ENCODE measurements at regions of chr7 and their contacts with region 1.

Region 1: DNA sequence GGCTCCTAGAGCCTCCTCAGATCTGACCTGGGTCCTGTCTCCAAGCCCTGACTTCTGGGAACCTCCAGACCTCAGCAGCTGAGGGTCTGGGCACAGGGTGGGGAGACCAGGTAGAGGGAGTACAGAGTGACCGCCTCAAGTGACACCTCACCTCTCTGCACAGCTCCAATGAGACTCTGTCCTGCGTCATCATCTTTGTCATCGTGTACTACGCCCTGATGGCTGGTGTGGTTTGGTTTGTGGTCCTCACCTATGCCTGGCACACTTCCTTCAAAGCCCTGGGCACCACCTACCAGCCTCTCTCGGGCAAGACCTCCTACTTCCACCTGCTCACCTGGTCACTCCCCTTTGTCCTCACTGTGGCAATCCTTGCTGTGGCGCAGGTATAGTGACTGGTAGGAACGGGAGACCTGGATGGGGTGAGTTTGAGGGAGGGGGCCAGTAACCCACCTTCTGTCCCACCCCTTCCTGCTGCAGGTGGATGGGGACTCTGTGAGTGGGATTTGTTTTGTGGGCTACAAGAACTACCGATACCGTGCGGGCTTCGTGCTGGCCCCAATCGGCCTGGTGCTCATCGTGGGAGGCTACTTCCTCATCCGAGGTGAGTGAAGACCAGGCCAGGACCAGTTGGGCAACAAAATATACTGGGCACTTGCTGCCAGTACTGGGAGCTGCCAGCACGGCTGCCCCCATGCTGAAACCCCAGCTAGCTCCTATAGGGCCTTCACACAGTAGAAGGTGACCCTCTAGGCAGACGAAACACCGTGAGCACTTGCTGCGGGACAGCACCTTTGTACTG is 17.8 kb downstream of the SMO start:
- DNase-seq: no peak
- ATAC-seq: no peak
- H3K4me3 ChIP-seq: no peak overlapping the region
- H3K27ac ChIP-seq: no peak overlapping the region
- H3K4me1 ChIP-seq: no peaks in the 10 kb centered on the region
- H3K27me3 ChIP-seq: no peaks in the 10 kb centered on the region
- CTCF ChIP-seq: no peak
- POLR2A ChIP-seq: no peak

Region 2: GRCh38 chr7:129163875-129164544 is 42.2 kb before region 1 on chr7:
- intact Hi-C with region 1: loop called (anchors 5 kb)
- DNase-seq: no peak
- ATAC-seq: peak; percentile 55
- H3K4me3 ChIP-seq: no peak overlapping the region
- H3K27ac ChIP-seq: no peak overlapping the region
- H3K4me1 ChIP-seq: no peaks in the 10 kb centered on the region
- H3K27me3 ChIP-seq: no peaks in the 10 kb centered on the region
- CTCF ChIP-seq: peak; percentile 65 to 91 (median 71)
- POLR2A ChIP-seq: no peak

Region 3: DNA sequence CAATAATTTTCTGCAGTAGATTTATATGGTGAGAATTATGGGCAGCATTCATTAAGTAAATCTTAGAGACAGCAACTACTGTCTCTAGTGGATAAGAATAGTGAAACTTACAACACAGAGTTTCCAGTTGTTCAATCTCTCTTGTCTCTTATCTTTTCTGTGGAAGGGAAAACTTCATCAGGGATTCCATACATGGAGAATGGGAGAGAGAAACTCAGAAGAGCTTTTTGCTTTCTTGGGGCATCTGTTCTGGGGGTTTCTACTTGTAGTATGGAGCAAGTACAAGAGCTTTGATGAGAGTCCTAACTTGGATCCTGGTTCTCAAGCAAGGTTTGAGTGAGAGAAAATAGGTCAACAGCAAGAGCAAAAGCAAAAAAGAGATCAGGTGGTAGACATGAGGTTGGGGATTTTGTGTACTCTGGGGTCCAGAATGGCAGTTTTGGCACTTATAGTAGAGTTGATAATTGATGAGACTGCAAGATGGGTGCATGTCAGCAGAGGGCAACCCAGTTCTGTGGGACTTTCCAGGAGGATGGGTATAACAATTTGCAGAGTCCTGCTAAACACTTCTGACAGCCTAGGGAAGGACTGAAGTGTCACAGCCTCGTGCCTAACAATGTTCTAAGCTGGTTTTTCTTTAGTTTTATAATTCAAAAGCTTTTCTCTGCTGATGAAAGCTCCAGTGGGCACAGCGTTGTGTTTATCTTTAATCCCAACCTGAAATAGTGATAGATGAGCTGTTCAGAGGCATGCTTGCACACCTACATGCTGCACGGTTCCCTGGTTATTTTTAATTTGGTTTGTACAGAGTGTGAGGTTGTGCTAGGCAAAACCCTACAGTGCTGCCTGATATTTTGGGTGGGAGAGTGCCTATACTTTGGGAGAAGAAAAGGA is 196.0 kb after region 1 on chr7:
- intact Hi-C with region 1: no loop called
- DNase-seq: no peak
- ATAC-seq: no peak
- H3K4me3 ChIP-seq: no peak overlapping the region
- H3K27ac ChIP-seq: no peak overlapping the region
- H3K4me1 ChIP-seq: no peaks in the 10 kb centered on the region
- H3K27me3 ChIP-seq: no peaks in the 10 kb centered on the region
- CTCF ChIP-seq: no peak
- POLR2A ChIP-seq: no peak